Activated naive CD4-positive, alpha-beta T cell treated with anti-CD3 and anti-CD28 coated beads for 36 hours (primary cell): ENCODE measurements at regions of chr5 and their contacts with region 1.

Region 1: GRCh38 chr5:3602785-3603502 is 7.3 kb downstream of the IRX1 start:
- DNase-seq: peak; percentile 19
- H3K4me3 Mint-ChIP-seq: no peak overlapping the region
- H3K27ac Mint-ChIP-seq: no peak overlapping the region
- H3K4me1 Mint-ChIP-seq: peaks cover 8% of the 10 kb centered on the region
- H3K27me3 Mint-ChIP-seq: peaks cover 77% of the 10 kb centered on the region

Region 2: GRCh38 chr5:2751592-2752021 is 851.3 kb before region 1 on chr5 and contains the start of gene IRX2:
- CTCF ChIA-PET with region 1: no interaction called
- intact Hi-C with region 1: loop called (anchors 5 kb)
- DNase-seq: no peak
- H3K4me3 Mint-ChIP-seq: no peak within 1 kb of the TSS
- H3K27ac Mint-ChIP-seq: no peak within 1 kb of the TSS
- H3K4me1 Mint-ChIP-seq: peaks cover 28% of the 10 kb centered on the region
- H3K27me3 Mint-ChIP-seq: peaks cover 58% of the 10 kb centered on the region
- total RNA-seq, gene IRX2: not detected

Region 3: DNA sequence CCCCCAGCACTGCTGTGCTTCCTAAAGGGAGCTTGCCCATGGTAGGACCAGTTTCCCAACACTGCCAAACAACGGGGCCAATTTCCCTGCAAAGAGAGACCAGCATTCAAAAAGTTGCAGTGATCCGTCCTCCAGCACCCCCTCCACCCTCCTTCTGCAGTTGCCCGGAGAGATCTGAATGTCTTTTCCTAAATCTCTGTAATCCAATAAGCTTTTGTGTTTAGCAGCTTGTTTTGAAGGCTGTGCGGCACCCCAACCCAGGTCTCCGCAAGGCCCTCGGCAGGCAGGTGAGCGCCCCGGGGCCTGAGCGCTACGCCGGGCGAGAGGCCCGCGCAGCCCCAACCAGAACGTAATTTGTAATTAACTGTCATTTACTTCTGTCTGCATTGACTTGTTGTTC is 484.6 kb before region 1 on chr5:
- CTCF ChIA-PET with region 1: no interaction called
- intact Hi-C with region 1: no loop called
- DNase-seq: no peak
- H3K4me3 Mint-ChIP-seq: no peak overlapping the region
- H3K27ac Mint-ChIP-seq: no peak overlapping the region
- H3K4me1 Mint-ChIP-seq: no peaks in the 10 kb centered on the region
- H3K27me3 Mint-ChIP-seq: peaks cover 68% of the 10 kb centered on the region

Region 4: GRCh38 chr5:3197304-3198073 is 405.5 kb before region 1 on chr5:
- CTCF ChIA-PET with region 1: no interaction called
- intact Hi-C with region 1: no loop called
- DNase-seq: no peak
- H3K4me3 Mint-ChIP-seq: no peak overlapping the region
- H3K27ac Mint-ChIP-seq: no peak overlapping the region
- H3K4me1 Mint-ChIP-seq: peaks cover 4% of the 10 kb centered on the region
- H3K27me3 Mint-ChIP-seq: peaks cover 27% of the 10 kb centered on the region